Stomach (tissue), 19 donors: ENCODE measurements at regions of chr17 and their contacts with region 1.

Region 1: DNA sequence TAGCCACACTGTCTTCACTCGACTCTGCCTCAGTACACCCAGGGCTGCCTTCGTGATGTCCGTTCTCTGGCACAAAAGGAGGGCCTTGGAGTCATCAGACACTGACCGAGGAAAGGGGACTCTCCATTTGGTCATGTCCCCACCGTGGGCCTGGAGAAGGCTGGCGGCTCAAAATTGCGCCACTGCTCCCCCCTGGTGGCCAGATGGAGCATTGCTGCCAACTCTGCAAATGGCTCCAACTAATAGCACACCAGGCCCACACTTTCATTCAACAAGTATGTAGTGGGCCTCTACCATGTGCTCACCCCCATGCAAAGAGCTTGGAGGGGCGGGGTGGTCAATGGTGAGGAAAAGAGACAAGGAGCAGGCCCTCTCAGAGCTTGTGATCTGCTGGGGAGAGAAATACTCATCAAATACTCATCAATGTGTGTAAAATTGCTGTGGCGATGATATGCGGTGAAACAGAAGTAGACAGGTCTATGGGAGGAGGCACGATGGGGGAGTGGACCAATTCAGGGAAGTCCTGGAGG is 5.2 kb upstream of the GRIN2C start:
- DNase-seq: peak; percentile 75 to 90
- H3K4me3 ChIP-seq: no peak overlapping the region
- H3K27ac ChIP-seq: no peak overlapping the region
- H3K4me1 ChIP-seq: peaks cover 22 to 31% (median 24%) of the 10 kb centered on the region in 4 donors
- H3K27me3 ChIP-seq: peaks cover 16 to 38% (median 26%) of the 10 kb centered on the region in 3 donors
- CTCF ChIP-seq: peak in 6 of 7 experiments; percentile 63 to 97 (median 96)
- EP300 ChIP-seq: no peak
- POLR2A ChIP-seq: no peak

Region 2: DNA sequence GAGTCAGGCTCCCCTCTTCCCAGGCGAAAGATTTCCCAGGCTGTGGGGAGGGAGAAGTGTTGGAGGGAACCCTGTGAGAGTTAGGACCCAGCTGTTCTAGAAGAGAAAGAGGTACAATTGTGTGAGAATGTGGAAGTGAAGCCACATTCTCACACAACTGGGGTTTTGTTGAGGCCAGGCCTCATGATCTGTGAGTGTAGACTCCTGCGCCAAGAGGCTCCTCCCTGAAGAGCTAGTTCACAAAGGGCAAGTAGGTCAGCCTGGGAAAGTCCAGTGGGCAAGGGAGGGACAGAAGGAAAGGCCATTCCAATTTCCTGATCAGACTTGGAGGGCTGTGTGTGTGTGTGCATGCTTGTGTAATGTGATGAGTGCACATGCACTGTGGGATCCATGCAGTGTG is 167.4 kb before region 1 on chr17:
- intact Hi-C with region 1: no loop called
- DNase-seq: no peak
- H3K4me3 ChIP-seq: no peak overlapping the region
- H3K27ac ChIP-seq: no peak overlapping the region
- H3K4me1 ChIP-seq: no peaks in the 10 kb centered on the region
- H3K27me3 ChIP-seq: peaks cover 0 to 22% (median 0%) of the 10 kb centered on the region in 3 donors
- CTCF ChIP-seq: no peak
- EP300 ChIP-seq: no peak
- POLR2A ChIP-seq: no peak

Region 3: DNA sequence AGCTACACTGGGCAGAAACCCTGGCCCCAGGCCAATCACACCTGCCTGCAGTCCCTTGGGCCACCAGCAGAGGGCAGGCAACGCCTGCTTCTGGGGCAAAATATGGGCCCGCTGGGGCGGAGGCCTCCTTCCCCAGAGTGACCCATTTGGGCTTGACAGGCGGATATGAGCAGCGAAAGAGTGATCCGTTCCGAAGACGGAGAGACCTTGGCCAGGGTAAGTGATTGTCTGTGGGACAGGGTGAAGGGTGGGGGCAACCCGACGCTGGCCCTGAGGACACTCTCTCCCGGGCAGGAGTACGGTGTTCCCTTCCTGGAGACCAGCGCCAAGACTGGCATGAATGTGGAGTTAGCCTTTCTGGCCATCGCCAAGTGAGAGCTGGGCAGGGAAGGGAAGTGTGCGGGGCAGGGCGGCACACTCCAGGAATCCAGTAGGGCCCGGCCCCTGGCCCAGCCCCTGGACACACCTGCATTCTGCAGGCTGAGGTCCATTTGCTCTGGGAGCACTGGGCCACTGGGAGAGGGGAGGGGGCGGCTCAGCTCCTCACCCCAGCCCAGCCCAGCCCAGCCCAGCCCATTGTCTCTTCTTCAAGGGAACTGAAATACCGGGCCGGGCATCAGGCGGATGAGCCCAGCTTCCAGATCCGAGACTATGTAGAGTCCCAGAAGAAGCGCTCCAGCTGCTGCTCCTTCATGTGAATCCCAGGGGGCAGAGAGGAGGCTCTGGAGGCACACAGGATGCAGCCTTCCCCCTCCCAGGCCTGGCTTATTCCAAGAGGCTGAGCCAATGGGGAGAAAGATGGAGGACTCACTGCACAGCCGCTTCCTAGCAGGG is 120.0 kb before region 1 on chr17:
- intact Hi-C with region 1: loop called (anchors 5 kb)
- DNase-seq: peak; percentile 89 to 96
- H3K4me3 ChIP-seq: peak overlapping the region; percentile 24 to 29 (median 28)
- H3K27ac ChIP-seq: peak overlapping the region; percentile 11 to 82 (median 79)
- H3K4me1 ChIP-seq: peaks cover 17 to 85% (median 62%) of the 10 kb centered on the region in 4 donors
- H3K27me3 ChIP-seq: peaks cover 0 to 22% (median 3%) of the 10 kb centered on the region in 3 donors
- CTCF ChIP-seq: peak in 6 of 7 experiments; percentile 97 to 100 (median 100)
- EP300 ChIP-seq: no peak
- POLR2A ChIP-seq: no peak

Region 4: DNA sequence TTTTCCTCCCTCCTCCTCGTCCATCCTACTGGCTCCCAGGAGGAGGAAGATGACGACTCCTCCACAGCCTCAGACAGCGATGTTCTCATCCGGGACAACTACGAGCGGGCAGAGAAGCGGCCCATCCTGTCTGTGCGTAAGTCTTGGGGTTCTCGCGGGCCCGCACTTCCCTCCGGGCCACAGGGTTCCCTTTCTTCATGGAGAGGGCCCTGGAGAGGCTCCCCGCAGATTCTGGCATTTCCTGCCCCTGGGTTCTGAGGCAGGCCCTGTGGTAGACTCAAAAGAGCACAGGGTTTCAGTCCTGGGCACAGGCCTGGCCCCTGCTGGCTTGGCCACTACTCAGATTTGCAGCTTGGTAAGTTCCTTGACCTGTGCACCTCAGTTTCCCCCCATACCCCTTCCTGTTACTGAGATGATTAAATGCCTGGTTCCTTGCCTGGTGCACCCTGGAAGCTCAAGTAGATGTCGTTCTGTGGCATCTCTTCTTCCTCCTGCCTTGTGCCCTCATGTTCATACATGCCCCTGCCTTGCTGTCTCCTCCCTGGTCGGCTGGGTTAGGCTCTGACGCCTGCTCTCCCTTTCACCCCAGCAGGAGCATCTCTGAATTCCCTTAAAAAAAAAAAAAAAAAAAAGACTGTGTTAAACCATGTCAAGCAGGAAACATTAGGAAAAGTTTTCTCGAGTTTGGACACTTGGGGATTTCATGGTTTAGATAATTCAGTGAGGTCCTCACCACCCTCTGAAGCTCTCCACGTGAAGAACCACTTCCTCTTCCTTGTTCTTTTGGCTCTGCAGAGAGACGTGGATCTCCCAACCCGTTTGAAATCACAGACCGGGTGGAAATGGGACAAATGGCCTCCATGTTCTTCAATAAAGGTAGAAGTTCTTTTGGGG is 74.5 kb before region 1 on chr17:
- intact Hi-C with region 1: loop called (anchors 5 kb)
- DNase-seq: no peak
- H3K4me3 ChIP-seq: no peak overlapping the region
- H3K27ac ChIP-seq: no peak overlapping the region
- H3K4me1 ChIP-seq: peaks cover 0 to 13% (median 0%) of the 10 kb centered on the region in 4 donors
- H3K27me3 ChIP-seq: no peaks in the 10 kb centered on the region
- CTCF ChIP-seq: no peak
- EP300 ChIP-seq: no peak
- POLR2A ChIP-seq: no peak

Region 5: GRCh38 chr17:74822939-74823367 is 42.0 kb before region 1 on chr17:
- intact Hi-C with region 1: no loop called
- DNase-seq: no peak
- H3K4me3 ChIP-seq: no peak overlapping the region
- H3K27ac ChIP-seq: peak overlapping the region in 1 of 5 donors; percentile 39
- H3K4me1 ChIP-seq: peaks cover 0 to 15% (median 0%) of the 10 kb centered on the region in 4 donors
- H3K27me3 ChIP-seq: no peaks in the 10 kb centered on the region
- CTCF ChIP-seq: no peak
- EP300 ChIP-seq: no peak
- POLR2A ChIP-seq: no peak